Activated naive CD4-positive, alpha-beta T cell treated with anti-CD3 and anti-CD28 coated beads for 36 hours (primary cell): ENCODE measurements at regions of chr4 and their contacts with region 1.

Region 1: DNA sequence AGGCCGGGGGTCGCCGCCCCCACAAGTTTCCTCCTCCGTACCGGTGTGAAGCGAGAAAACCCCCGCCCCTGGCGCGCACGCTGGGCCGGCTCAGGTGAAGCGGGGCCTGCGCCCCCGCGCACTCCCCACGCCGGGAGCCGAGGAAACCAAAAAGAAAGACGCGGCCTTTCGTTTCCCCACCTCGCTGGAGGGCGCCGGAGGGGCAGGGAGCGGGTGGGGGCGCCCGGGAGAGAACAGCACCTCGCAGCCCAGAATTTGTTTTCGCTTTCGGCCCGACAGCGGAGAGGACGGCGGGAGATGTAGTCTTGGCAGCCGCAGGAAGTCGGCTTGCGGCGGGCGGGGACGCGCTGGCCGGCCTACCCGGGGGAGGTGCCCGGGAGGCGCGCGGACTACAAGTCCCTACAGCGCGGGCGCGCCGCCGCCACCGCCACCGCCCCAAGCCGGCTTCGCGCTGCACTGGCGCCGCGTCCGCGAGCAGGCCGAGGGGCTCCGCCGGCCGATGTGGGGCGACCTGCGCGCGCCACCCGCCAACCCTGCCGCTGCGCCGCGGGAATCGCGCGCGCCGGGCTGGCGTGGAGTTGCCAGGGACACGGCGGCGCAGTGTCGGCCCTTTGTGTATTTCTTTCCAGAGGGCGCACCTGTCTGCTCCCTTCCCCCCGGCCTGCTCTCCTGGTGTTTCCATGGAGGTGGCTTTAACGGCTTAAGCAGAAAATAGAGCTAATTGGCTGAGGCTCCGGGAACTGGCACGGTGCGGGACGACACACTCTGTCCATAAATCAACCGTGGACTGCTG is at the start of gene OTUD4:
- DNase-seq: peak; percentile 96
- H3K4me3 Mint-ChIP-seq: peak within 1 kb of the TSS; percentile 93
- H3K27ac Mint-ChIP-seq: peak within 1 kb of the TSS; percentile 98
- H3K4me1 Mint-ChIP-seq: peaks cover 29% of the 10 kb centered on the region
- H3K27me3 Mint-ChIP-seq: no peaks in the 10 kb centered on the region
- total RNA-seq, gene OTUD4: 35.9 to 37.1 TPM

Region 2: GRCh38 chr4:143513306-143514168 is 1667.0 kb before region 1 on chr4 and contains the start of gene SMARCA5:
- CTCF ChIA-PET with region 1: no interaction called
- intact Hi-C with region 1: loop called (anchors 1 kb)
- DNase-seq: peak; percentile 96
- H3K4me3 Mint-ChIP-seq: peak within 1 kb of the TSS; percentile 96
- H3K27ac Mint-ChIP-seq: peak within 1 kb of the TSS; percentile 97
- H3K4me1 Mint-ChIP-seq: peaks cover 30% of the 10 kb centered on the region
- H3K27me3 Mint-ChIP-seq: no peaks in the 10 kb centered on the region
- total RNA-seq, gene SMARCA5: 62.4 to 63.5 TPM

Region 3: DNA sequence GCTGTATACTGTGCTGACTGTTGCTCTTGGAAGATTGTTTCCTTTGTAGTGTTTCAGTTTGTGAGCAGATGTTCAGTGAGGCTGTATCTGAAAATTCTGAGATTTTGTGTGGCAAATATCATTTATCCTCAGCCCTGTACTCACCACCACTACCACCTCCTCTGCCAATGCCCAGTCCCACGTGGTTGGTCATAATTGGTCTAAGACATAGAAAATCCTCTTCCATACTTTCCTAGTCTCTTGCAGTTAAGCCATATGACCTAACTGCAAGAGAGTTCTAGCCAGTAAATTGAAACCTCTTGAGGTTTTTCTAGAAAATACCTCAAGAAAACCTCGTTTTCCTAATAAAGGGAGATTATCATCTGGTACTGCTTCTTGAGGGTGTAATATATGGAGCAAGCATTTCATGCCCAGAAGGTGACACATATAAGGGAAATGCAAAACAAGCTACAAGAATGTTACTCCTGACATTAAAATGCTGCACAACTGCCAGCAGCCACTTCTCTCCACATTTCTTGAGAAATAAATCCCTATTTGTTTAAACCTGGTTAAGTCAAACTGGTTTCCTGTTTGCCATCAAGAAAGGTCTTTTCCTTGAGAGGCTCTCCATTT is 49.6 kb before region 1 on chr4:
- CTCF ChIA-PET with region 1: interaction called, 4 read pairs
- intact Hi-C with region 1: loop called (anchors 1 kb)
- DNase-seq: no peak
- H3K4me3 Mint-ChIP-seq: no peak overlapping the region
- H3K27ac Mint-ChIP-seq: peak overlapping the region; percentile 65
- H3K4me1 Mint-ChIP-seq: peaks cover 50% of the 10 kb centered on the region
- H3K27me3 Mint-ChIP-seq: no peaks in the 10 kb centered on the region

Region 4: GRCh38 chr4:145299380-145300076 is 119.0 kb after region 1 on chr4:
- CTCF ChIA-PET with region 1: no interaction called
- intact Hi-C with region 1: loop called (anchors 2 kb)
- DNase-seq: peak; percentile 88
- H3K4me3 Mint-ChIP-seq: no peak overlapping the region
- H3K27ac Mint-ChIP-seq: no peak overlapping the region
- H3K4me1 Mint-ChIP-seq: peaks cover 23% of the 10 kb centered on the region
- H3K27me3 Mint-ChIP-seq: peaks cover 9% of the 10 kb centered on the region

Region 5: DNA sequence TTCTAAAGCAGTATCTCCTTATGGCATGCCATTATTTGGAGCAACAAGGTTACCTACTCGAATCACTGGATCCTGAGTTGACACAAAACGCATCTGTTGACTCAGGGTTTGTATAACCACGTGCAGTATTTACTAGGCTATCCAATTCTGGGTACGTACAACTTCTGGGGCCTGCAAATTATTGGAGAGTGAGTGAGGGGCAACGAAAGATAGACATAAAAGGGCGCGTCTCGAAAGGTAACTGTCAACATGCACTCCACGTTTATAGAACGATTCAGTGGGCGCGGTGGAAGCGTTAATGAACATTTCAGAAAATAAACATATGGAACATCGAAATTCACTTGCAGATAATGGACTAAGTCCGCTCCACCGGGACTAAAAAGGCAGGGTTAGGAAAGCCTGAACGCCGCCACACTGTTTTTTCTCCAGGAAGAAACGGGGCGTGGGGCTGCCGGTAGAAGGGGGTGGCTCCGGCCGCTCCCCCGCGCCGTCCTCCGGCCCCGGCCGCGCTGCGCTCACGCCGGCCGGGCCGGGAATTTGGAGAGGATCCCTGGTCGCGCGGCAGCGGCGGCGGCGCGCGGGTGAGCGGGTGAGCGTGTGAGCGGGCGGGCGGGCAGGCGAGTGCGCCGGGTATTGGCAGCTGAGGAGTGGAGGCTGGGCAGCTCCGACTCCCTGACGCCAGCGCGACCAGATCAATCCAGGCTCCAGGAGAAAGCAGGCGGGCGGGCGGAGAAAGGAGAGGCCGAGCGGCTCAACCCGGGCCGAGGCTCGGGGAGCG is 300.9 kb after region 1 on chr4 and contains the start of gene SMAD1:
- CTCF ChIA-PET with region 1: no interaction called
- intact Hi-C with region 1: loop called (anchors 1 kb)
- DNase-seq: peak; percentile 29
- H3K4me3 Mint-ChIP-seq: peak within 1 kb of the TSS; percentile 73
- H3K27ac Mint-ChIP-seq: no peak within 1 kb of the TSS
- H3K4me1 Mint-ChIP-seq: peaks cover 5% of the 10 kb centered on the region
- H3K27me3 Mint-ChIP-seq: peaks cover 31% of the 10 kb centered on the region
- total RNA-seq, gene SMAD1: 0.57 to 0.79 TPM

Region 6: DNA sequence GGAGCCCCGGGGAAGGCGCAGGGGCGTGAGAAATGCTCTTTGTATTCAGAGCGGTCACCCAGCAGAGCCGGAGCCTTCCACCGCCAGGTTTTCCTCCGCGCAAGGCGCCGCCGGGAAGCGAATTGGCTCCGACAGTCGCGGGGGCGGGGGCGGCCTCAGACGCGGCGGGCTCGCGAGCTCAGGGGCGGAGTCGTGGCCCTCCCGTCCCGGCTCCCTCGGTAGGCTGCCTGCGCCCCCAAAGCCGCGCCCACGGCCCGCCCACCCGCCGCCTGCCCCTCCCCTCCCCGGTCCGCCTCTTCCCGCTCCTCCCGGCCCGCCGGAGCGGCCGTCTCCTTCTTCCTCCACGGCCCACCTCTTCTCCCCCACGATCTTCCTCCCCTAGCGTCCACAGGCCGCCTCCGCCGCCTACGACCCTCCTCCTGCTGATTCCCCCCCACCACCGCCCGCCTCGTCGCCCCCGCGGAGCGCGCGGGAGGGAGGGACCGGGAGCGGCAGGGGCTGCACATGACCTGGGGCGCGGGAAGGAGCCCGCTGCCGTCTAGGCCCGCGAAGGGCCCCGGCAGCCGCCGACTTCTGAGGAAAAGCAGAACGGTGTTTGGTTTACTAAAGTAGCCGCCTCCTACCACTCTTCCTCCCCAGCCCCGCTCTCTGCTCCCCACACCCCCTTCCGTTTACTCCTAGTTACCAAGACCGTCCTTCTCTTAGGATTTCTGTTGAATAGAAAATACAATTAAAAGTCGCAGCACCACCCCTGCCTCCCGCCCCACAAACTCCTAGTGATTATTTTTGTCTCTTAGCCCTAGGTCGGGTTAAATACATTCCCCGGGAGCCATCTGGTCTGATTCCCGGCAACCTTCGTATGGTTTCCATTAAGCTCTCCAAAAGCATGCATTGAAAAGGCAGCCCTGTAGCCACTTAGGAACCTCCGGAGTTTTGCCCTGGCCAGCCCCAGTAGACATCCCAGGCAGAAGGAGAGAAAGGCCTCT is 552.7 kb after region 1 on chr4:
- CTCF ChIA-PET with region 1: no interaction called
- intact Hi-C with region 1: loop called (anchors 1 kb)
- DNase-seq: peak; percentile 91
- H3K4me3 Mint-ChIP-seq: peak overlapping the region; percentile 75
- H3K27ac Mint-ChIP-seq: peak overlapping the region; percentile 36
- H3K4me1 Mint-ChIP-seq: peaks cover 7% of the 10 kb centered on the region
- H3K27me3 Mint-ChIP-seq: peaks cover 10% of the 10 kb centered on the region

Region 7: GRCh38 chr4:146175541-146176453 is 995.3 kb after region 1 on chr4 and contains the start of gene LSM6:
- CTCF ChIA-PET with region 1: no interaction called
- intact Hi-C with region 1: loop called (anchors 1 kb)
- DNase-seq: peak; percentile 89
- H3K4me3 Mint-ChIP-seq: peak within 1 kb of the TSS; percentile 80
- H3K27ac Mint-ChIP-seq: peak within 1 kb of the TSS; percentile 90
- H3K4me1 Mint-ChIP-seq: peaks cover 48% of the 10 kb centered on the region
- H3K27me3 Mint-ChIP-seq: no peaks in the 10 kb centered on the region
- total RNA-seq, gene LSM6: 62.9 to 65.8 TPM